Sigmoid colon (tissue), 7 donors: ENCODE measurements at regions of chr4 and their contacts with region 1.

Region 1: DNA sequence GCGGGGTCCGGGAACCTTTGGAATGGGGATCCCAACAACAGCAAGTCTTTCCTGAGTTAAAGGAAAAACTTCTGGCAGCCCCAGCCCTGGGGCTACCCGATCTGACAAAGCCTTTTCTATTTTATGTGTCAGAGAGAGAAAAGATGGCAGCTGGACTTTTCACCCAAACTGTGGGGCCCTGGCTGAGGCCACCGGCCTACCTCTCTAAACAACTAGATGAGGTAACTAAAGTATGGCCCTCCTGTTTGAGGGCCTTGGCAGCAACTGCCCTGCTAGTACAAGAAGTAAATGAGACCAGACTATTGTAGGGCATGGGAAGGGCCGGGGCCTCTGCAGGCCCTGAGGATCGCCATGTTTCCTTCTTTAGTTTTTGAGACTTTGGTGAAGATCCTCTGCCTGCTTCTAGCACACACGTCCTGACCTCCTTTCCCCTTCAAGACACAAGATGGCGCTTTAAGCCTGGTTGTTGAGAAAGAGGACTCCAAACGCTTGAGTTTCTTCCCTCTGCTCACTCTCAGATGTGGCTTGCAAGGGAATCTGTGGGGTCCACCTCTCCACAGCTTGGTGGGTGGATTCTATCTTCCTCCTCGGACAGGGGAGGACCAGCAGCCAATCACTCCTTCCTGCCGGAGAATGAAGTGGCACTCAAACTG is 18.5 kb upstream of the DRD5 start:
- DNase-seq: no peak
- H3K4me3 ChIP-seq: no peak overlapping the region
- H3K27ac ChIP-seq: no peak overlapping the region
- H3K4me1 ChIP-seq: no peaks in the 10 kb centered on the region
- H3K27me3 ChIP-seq: peaks cover 0 to 18% (median 0%) of the 10 kb centered on the region in 3 donors
- CTCF ChIP-seq: peak; percentile 36 to 63 (median 48)
- EP300 ChIP-seq: no peak
- POLR2A ChIP-seq: no peak

Region 2: GRCh38 chr4:10045481-10045880 is 282.5 kb after region 1 on chr4:
- intact Hi-C with region 1: no loop called
- DNase-seq: no peak
- H3K4me3 ChIP-seq: no peak overlapping the region
- H3K27ac ChIP-seq: no peak overlapping the region
- H3K4me1 ChIP-seq: no peaks in the 10 kb centered on the region
- H3K27me3 ChIP-seq: no peaks in the 10 kb centered on the region
- CTCF ChIP-seq: no peak
- EP300 ChIP-seq: no peak
- POLR2A ChIP-seq: no peak

Region 3: DNA sequence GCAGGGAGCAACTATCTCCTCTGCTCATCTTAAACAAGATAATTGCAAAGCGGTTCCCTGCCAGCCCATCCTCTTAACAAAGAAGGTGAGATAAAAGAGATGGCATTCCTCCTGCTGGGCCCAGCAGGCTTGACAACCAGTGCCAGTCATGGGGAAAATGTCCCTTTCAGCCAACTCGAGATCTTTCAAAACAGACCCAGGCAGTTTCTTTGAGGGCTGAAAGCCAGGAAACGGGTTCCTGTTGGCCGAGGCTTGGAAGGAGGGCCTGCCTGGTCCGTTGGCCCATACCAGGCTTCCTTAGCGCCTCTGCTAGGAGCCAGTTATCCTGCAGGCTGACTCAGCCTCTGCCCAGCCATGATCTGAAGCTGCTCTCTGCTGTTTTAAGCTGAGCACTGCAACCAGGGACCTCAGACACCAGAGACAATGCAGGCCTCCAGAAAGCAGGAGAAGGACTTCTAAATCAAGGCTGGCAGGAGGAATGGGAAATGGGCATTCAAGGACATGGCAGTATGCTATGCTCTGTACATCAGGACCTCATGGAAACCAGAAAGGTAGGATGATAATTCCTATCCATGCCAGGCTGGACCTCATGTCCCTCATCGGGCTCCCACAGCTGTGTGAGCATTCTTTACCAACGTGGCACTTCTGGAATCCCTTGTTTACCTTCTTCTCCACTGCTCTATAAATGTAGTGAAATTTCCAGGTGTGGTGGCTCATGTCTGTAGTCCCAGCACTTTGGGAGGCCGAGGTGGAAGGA is 300.8 kb after region 1 on chr4:
- intact Hi-C with region 1: loop called (anchors 2 kb)
- DNase-seq: peak; percentile 89
- H3K4me3 ChIP-seq: no peak overlapping the region
- H3K27ac ChIP-seq: peak overlapping the region; percentile 16 to 62 (median 54)
- H3K4me1 ChIP-seq: peaks cover 0 to 14% (median 12%) of the 10 kb centered on the region in 4 donors
- H3K27me3 ChIP-seq: no peaks in the 10 kb centered on the region
- CTCF ChIP-seq: peak; percentile 29 to 62 (median 47)
- EP300 ChIP-seq: no peak
- POLR2A ChIP-seq: no peak

Region 4: GRCh38 chr4:10403633-10404445 is 640.9 kb after region 1 on chr4:
- intact Hi-C with region 1: loop called (anchors 5 kb)
- DNase-seq: no peak
- H3K4me3 ChIP-seq: no peak overlapping the region
- H3K27ac ChIP-seq: no peak overlapping the region
- H3K4me1 ChIP-seq: no peaks in the 10 kb centered on the region
- H3K27me3 ChIP-seq: no peaks in the 10 kb centered on the region
- CTCF ChIP-seq: peak; percentile 34 to 68 (median 57)
- EP300 ChIP-seq: no peak
- POLR2A ChIP-seq: no peak

Region 5: GRCh38 chr4:10554694-10555093 is 791.7 kb after region 1 on chr4:
- intact Hi-C with region 1: loop called (anchors 10 kb)
- DNase-seq: no peak
- H3K4me3 ChIP-seq: no peak overlapping the region
- H3K27ac ChIP-seq: no peak overlapping the region
- H3K4me1 ChIP-seq: peaks cover 0 to 4% (median 2%) of the 10 kb centered on the region in 4 donors
- H3K27me3 ChIP-seq: no peaks in the 10 kb centered on the region
- CTCF ChIP-seq: peak; percentile 31 to 77 (median 58)
- EP300 ChIP-seq: no peak
- POLR2A ChIP-seq: no peak